A673 (cell line): ENCODE measurements at regions of chr11 and their contacts with region 1.

Region 1: DNA sequence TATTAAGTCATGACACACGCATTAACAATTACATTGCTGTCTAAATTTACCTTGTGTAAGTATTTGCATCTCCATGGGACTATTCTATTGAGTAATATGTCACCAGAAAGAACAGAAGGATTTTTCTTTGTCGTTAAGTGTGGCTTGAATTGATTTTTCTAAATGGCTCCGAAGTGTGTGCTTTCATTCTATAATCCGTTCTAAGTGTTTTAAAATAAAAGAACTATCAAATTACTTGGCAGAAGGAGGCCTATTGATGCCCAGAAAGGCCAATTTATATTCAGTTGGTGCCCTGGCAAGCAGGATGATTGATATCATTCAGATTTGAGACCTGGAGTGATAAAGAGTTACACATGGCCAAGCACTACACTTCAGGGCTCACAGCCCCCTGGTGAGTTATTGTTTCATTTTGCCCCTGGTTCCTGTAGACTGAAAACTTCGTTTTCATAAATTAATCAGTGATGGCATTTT is 538.9 kb upstream of the ANO5 start:
- DNase-seq: peak; percentile 85
- H3K4me3 ChIP-seq: no peak overlapping the region
- H3K27ac ChIP-seq: no peak overlapping the region
- H3K4me1 ChIP-seq: peaks cover 11% of the 10 kb centered on the region
- H3K27me3 ChIP-seq: no peaks in the 10 kb centered on the region
- CTCF ChIP-seq: no peak

Region 2: DNA sequence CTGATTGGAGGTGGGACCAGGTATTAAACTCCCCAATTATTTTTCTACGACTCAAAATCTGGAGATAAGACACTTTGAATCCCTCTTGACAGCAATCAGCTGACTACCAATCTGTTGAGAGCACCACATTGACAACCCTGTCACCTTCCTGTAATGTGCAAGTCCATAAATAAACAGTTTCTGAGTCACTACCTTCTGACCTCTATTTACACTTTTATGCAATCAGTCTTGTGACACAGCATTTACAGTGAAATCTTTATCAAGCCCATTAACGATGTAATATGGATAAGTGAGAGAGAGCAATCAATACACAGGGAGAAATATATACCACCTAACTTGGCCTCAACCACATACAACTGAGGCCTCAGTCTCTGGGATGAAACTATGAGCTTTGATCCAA is 255.2 kb after region 1 on chr11:
- CTCF ChIA-PET with region 1: no interaction called
- POLR2A ChIA-PET with region 1: no interaction called
- intact Hi-C with region 1: loop called (anchors 10 kb)
- DNase-seq: peak; percentile 42
- H3K4me3 ChIP-seq: no peak overlapping the region
- H3K27ac ChIP-seq: peak overlapping the region; percentile 77
- H3K4me1 ChIP-seq: peaks cover 81% of the 10 kb centered on the region
- H3K27me3 ChIP-seq: no peaks in the 10 kb centered on the region
- CTCF ChIP-seq: no peak